IMR-90 (cell line): ENCODE measurements at regions of chr17 and their contacts with region 1.

Region 1: DNA sequence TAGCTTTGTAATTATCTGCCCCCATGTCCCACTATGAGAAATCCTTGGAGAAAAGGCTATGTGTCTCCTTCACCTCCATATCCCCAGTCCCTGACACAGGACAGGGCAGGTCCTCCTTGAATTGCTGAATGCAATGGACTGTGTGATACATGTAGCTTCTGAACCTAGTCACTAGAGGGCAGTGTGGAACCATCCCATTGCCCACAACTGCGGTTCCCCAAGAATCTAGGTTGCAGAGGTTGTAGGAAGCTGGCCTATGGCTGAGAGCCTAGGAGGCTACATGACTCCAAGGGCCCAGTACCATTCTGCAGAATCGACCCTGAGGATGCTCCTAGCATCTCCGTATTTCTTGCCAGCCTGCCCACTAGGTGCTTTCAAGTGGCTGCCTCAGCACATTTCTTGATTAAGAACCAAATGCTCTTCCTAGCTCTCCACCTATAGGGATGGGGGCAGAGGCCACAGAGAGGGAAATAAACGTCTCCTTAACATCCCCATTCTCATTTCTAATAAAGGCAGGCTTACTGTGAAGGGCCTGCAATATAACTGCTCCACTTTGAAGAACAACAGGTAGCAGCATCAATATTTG is 394.0 kb downstream of the CA10 start:
- DNase-seq: peak; percentile 45
- ATAC-seq: peak; percentile 98
- H3K4me3 ChIP-seq: no peak overlapping the region
- H3K27ac ChIP-seq: no peak overlapping the region
- H3K4me1 ChIP-seq: no peaks in the 10 kb centered on the region
- H3K27me3 ChIP-seq: no peaks in the 10 kb centered on the region
- CTCF ChIP-seq: peak; percentile 65
- POLR2A ChIP-seq: no peak
- RAD21 ChIP-seq: peak; percentile 64

Region 2: GRCh38 chr17:51298508-51299371 is 465.7 kb before region 1 on chr17:
- CTCF ChIA-PET with region 1: no interaction called
- POLR2A ChIA-PET with region 1: no interaction called
- dilution Hi-C with region 1: no loop called
- in situ Hi-C with region 1: no loop called
- intact Hi-C with region 1: loop called (anchors 2 kb)
- DNase-seq: peak; percentile 54
- ATAC-seq: peak; percentile 91
- H3K4me3 ChIP-seq: no peak overlapping the region
- H3K27ac ChIP-seq: no peak overlapping the region
- H3K4me1 ChIP-seq: no peaks in the 10 kb centered on the region
- H3K27me3 ChIP-seq: no peaks in the 10 kb centered on the region
- CTCF ChIP-seq: peak; percentile 74
- POLR2A ChIP-seq: no peak
- RAD21 ChIP-seq: peak; percentile 69

Region 3: GRCh38 chr17:51640108-51640622 is 124.3 kb before region 1 on chr17:
- CTCF ChIA-PET with region 1: no interaction called
- POLR2A ChIA-PET with region 1: no interaction called
- dilution Hi-C with region 1: no loop called
- in situ Hi-C with region 1: no loop called
- intact Hi-C with region 1: no loop called
- DNase-seq: no peak
- ATAC-seq: no peak
- H3K4me3 ChIP-seq: no peak overlapping the region
- H3K27ac ChIP-seq: no peak overlapping the region
- H3K4me1 ChIP-seq: no peaks in the 10 kb centered on the region
- H3K27me3 ChIP-seq: no peaks in the 10 kb centered on the region
- CTCF ChIP-seq: no peak
- POLR2A ChIP-seq: no peak
- RAD21 ChIP-seq: no peak